ENCODE measurements at regions of chr11 and their contacts with region 1.

Region 1: DNA sequence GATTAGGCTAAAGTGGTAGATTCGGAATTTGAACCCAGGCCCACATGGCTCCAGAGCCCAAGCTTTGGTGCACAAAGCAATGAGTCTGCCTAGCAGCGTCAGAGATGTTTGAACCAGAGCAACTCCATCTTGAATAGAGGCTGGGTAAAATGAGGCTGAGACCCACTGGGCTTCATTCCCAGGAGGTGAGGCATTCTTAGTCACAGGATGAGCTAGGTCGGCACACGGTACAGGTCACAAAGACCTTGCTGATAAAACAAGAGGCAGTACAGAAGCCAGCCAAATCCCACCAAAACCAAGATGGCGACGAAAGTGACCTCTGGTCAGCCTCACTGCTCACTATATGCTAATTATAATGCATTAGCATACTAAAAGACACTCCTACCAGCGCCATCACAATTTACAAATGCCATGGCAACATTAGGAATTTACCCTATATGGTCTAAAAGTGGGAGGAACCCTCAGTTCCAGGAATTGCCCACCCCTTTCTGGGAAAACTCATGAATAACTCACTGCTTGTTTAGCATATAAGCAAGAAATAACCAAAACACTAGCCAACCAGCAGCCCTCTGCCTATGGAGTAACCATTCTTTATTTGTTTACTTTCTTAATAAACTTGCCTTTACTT is 40.3 kb upstream of the DAGLA start:
- DNase-seq: no peak
- H3K4me3 ChIP-seq: no peak overlapping the region
- H3K27ac ChIP-seq: no peak overlapping the region
- H3K4me1 ChIP-seq: peaks cover 0 to 5% (median 3%) of the 10 kb centered on the region in 4 experiments; a peak in 2 of 7 replicates
- H3K27me3 ChIP-seq: no peaks in the 10 kb centered on the region
- CTCF ChIP-seq: no peak
- EP300 ChIP-seq: no peak
- POLR2A ChIP-seq: no peak
- RAD21 ChIP-seq: no peak

Region 2: DNA sequence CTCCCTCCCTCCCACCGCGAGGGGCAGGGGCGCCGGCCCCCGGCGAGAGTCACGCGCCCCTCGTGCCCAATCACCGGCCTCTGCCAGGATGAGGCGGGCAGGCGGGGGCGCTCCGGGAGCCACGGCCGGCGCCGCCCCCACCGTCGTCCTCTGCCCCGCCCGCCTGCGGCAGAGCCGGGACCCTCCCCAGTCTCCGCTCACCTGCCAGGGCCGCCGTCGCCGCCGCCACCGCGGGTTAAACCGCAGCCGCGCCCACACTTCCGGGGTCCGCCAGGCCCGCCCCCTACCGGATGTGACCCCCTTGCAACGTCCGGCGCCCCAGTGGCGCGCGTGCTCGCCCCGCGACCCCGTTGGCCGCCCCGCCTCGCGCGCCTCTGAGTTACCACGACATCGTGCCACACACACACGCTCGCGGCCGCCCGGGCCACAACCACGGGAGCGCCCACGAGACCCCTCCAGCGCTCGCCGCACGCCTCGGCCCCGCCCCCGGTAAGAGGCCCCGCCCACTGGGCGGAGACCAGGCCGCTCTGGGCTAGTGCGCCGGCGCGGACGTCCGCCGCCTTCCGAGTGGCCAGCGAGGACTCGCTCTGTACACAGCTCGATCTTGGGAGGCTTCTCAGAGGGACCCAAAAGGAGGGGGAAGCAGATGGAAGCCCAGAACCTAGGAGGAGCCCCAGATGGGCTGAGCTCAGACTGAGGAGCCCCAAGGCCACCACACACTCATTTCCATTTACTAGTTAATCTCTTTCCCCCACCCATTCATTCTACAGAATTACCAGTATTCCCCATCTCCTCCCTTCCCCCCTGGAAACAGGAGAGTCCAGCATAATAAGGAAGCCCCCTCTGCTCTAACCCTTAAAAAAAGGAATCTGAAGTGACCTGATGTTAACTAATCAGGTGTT is 478.5 kb before region 1 on chr11 and contains the start of gene VPS37C:
- CTCF ChIA-PET with region 1: no interaction called
- POLR2A ChIA-PET with region 1: no interaction called
- DNase-seq: peak; percentile 44 to 96
- H3K4me3 ChIP-seq: peak within 1 kb of the TSS; percentile 70 to 83 (median 77)
- H3K27ac ChIP-seq: peak within 1 kb of the TSS; percentile 88
- H3K4me1 ChIP-seq: peaks cover 0 to 7% (median 2%) of the 10 kb centered on the region in 4 experiments; a peak in 3 of 7 replicates
- H3K27me3 ChIP-seq: no peaks in the 10 kb centered on the region
- CTCF ChIP-seq: no peak
- EP300 ChIP-seq: no peak
- POLR2A ChIP-seq: peak; percentile 57 to 78
- RAD21 ChIP-seq: no peak
- total RNA-seq, gene VPS37C: 18.0 and 21.0 TPM in 2 replicates

Region 3: GRCh38 chr11:61477727-61478148 is 162.2 kb before region 1 on chr11:
- CTCF ChIA-PET with region 1: interaction called, 78 read pairs
- POLR2A ChIA-PET with region 1: interaction called, 4 read pairs
- DNase-seq: peak; percentile 47 to 94
- H3K4me3 ChIP-seq: no peak overlapping the region
- H3K27ac ChIP-seq: no peak overlapping the region
- H3K4me1 ChIP-seq: peaks cover 0 to 16% (median 8%) of the 10 kb centered on the region in 4 experiments; a peak in 5 of 7 replicates
- H3K27me3 ChIP-seq: no peaks in the 10 kb centered on the region
- CTCF ChIP-seq: peak; percentile 78 to 97 (median 89)
- EP300 ChIP-seq: no peak
- POLR2A ChIP-seq: no peak
- RAD21 ChIP-seq: peak; percentile 94 to 96

Region 4: DNA sequence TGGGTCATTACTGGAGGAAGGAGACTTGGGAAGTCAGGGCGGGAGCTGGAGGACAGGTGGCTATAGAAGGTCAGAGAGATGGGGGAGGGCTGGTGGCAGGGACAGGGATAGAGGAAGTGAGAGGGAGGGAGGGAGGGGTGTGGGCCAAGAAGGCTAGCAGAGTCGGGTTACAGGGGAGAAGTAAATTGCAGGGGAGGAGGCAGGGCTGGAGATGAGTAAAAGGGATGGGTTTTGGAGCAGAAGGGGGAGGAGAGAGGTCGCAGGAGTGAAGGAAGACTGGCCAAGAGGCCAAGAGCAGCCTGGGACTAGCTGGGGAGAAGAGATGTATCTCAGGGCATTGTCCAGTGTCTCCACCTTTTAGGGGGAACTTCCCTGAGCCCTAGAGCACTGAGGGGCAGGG is 98.3 kb before region 1 on chr11:
- CTCF ChIA-PET with region 1: interaction called, 14 read pairs
- POLR2A ChIA-PET with region 1: no interaction called
- DNase-seq: no peak
- H3K4me3 ChIP-seq: no peak overlapping the region
- H3K27ac ChIP-seq: no peak overlapping the region
- H3K4me1 ChIP-seq: peaks cover 5 to 35% (median 18%) of the 10 kb centered on the region in 4 experiments
- H3K27me3 ChIP-seq: no peaks in the 10 kb centered on the region; a peak in 1 of 7 replicates
- CTCF ChIP-seq: no peak
- EP300 ChIP-seq: no peak
- POLR2A ChIP-seq: no peak
- RAD21 ChIP-seq: no peak

Region 5: DNA sequence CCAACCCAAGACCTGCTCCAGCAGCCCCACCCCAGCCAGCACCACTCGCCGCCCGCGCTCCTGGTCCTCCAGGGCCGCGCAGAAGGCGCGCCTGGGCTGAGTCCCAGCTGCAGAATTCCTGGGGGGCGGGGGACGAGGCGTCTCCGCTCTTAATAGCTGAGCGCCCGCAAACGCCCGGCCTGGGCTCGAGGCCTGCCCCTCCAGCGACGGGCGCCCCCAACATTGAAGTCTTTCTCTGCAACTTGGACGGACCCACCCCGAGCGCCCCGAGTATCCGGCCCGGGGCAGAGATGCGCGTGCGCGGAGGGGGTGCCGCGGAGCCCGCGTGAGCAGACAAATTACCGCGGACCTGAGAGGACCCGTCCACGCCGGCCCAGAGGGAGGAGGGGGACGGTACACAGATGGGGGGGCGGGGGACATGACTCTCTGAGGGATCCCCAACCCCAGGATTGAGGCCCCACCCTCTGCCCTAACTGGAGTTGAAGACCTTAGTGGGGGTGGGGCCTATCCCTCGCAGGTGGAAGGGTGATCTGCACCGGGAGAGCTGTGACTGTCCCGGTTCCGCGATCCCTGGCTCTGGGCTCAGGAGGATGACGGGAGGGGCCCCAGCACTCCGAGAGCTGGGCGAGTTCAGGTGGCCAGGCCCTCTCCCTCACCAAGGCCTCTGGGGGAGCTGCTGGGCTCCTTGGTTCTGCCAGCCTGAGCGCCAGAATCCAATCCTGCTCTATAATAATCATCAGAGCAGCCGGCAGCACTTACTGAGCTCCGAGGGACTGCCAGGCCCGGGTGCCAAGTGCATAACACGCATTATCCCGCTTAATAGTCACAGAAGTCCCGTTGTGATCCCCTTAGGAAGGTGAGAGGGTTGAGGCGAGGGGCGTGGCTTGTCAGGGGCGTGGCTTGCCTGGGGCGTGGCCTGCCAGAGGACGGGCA is 52.1 kb before region 1 on chr11:
- CTCF ChIA-PET with region 1: interaction called, 335 read pairs
- POLR2A ChIA-PET with region 1: interaction called, 3 read pairs
- DNase-seq: peak in 1 of 2 experiments; percentile 99
- H3K4me3 ChIP-seq: peak overlapping the region; percentile 40 to 68 (median 54)
- H3K27ac ChIP-seq: no peak overlapping the region
- H3K4me1 ChIP-seq: peaks cover 0 to 18% (median 14%) of the 10 kb centered on the region in 4 experiments; a peak in 6 of 7 replicates
- H3K27me3 ChIP-seq: peaks cover 0 to 21% (median 11%) of the 10 kb centered on the region in 4 experiments; a peak in 3 of 7 replicates
- CTCF ChIP-seq: peak; percentile 29 to 45 (median 44)
- EP300 ChIP-seq: no peak
- POLR2A ChIP-seq: no peak
- RAD21 ChIP-seq: peak in 1 of 2 experiments; percentile 32; a peak in 2 of 4 replicates

Region 6: DNA sequence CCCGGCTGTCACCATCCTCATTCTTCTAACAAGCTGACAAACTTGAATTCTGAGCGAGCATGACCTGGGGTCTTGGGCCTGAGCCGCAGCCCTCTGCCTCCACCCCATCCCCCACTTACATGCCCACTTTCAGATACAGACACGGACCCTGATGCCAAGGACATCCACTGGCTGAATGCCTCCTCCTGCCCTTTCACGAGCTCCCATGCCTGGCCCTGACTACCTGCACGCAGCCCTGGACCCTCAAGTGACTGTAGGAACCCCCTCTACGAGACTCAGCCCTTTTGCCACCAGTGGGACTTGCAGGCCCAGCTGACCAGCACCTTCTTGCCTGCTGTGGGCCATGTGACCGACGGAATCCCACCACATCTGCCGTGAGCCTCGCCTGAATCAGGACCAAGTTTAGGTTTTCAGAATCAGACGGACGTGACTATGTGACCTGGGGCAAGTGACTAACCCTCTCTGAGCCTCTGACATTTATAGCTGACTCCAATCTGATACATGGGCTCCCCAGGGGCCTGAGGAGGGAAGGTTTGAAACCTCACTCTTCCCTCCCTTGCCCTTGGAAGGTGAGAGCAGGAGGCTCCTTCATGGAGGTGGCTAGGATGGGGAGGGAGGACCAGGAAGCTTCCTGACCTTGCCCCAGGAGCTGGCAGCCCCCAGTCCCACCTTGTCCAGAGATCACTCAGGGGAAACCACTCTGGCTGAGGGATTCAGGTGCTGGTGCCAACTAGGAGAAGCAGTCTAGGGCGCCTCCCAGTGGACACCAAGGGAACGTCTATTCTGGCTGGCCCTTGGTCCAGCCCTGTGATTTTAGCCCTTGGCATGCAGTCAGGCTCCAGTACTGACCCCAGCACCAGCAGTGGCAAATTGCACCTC is 12.1 kb before region 1 on chr11:
- CTCF ChIA-PET with region 1: interaction called, 63 read pairs
- POLR2A ChIA-PET with region 1: interaction called, 3 read pairs
- DNase-seq: peak in 1 of 2 experiments; percentile 92
- H3K4me3 ChIP-seq: no peak overlapping the region
- H3K27ac ChIP-seq: peak overlapping the region; percentile 76; the same call in 1 of the 2 replicates
- H3K4me1 ChIP-seq: peaks cover 6 to 25% (median 18%) of the 10 kb centered on the region in 4 experiments
- H3K27me3 ChIP-seq: no peaks in the 10 kb centered on the region
- CTCF ChIP-seq: peak; percentile 89 to 99 (median 97)
- EP300 ChIP-seq: no peak
- POLR2A ChIP-seq: no peak
- RAD21 ChIP-seq: peak; percentile 94 to 97

Region 7: GRCh38 chr11:61725781-61726231 is 85.9 kb after region 1 on chr11:
- CTCF ChIA-PET with region 1: interaction called, 11 read pairs
- POLR2A ChIA-PET with region 1: no interaction called
- DNase-seq: no peak
- H3K4me3 ChIP-seq: no peak overlapping the region
- H3K27ac ChIP-seq: no peak overlapping the region
- H3K4me1 ChIP-seq: no peaks in the 10 kb centered on the region
- H3K27me3 ChIP-seq: no peaks in the 10 kb centered on the region
- CTCF ChIP-seq: no peak
- EP300 ChIP-seq: no peak
- POLR2A ChIP-seq: no peak
- RAD21 ChIP-seq: no peak

Region 8: GRCh38 chr11:61985885-61986345 is 346.0 kb after region 1 on chr11:
- CTCF ChIA-PET with region 1: no interaction called
- POLR2A ChIA-PET with region 1: no interaction called
- DNase-seq: no peak
- H3K4me3 ChIP-seq: no peak overlapping the region
- H3K27ac ChIP-seq: no peak overlapping the region
- H3K4me1 ChIP-seq: peaks cover 0 to 2% (median 0%) of the 10 kb centered on the region in 4 experiments; a peak in 1 of 7 replicates
- H3K27me3 ChIP-seq: peaks cover 6 to 16% (median 11%) of the 10 kb centered on the region in 4 experiments; a peak in 5 of 7 replicates
- CTCF ChIP-seq: no peak
- EP300 ChIP-seq: no peak
- POLR2A ChIP-seq: no peak
- RAD21 ChIP-seq: no peak

Measured in H1 (cell line).